CD4-positive, alpha-beta T cell (primary cell): ENCODE measurements at regions of chr18 and their contacts with region 1.

Region 1: DNA sequence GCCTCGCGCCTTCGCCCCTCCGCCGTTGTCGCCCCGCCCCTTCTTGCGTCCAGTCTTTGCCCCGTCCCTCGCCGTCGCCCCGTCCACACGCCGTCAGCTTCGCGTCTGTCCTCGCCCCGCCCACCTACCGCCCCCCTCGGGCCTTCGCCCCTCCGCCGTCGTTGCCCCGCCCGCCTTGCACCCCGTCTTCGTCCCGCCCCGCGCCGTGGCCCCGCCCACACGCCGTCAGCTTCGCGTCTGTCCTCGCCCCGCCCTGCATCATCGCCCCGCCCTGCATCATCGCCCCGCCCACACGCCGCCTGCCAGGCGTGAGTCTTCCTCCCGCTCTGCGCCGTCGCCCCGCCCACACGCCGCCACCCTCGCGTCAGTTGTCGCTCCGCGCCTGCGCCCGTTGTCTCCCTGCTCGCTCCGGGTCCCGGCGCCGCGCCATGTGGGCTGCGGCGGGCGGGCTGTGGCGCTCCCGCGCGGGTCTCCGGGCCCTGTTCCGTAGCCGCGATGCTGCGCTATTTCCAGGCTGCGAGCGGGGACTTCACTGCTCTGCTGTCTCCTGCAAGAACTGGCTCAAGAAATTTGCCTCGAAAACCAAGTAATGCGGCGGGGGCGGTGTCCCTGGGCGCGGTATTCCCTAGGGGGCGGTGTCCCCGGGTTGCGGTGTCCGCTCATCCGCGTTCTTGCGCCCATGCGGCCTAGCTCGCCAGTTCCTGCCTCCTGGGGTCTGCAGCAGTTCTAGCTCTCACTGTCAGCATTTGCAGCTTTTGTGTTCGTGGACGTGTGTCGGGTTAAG is at the start of gene RBFA:
- DNase-seq: peak; percentile 99 to 100 (median 100)
- ATAC-seq: peak; percentile 77
- H3K4me3 ChIP-seq: peak within 1 kb of the TSS; percentile 92
- H3K4me3 Mint-ChIP-seq: peak within 1 kb of the TSS; percentile 81
- H3K27ac ChIP-seq: peak within 1 kb of the TSS; percentile 83 to 96
- H3K27ac Mint-ChIP-seq: peak within 1 kb of the TSS; percentile 91
- H3K4me1 ChIP-seq: peaks cover 23% of the 10 kb centered on the region
- H3K4me1 Mint-ChIP-seq: peaks cover 41% of the 10 kb centered on the region
- H3K27me3 ChIP-seq: no peaks in the 10 kb centered on the region
- H3K27me3 Mint-ChIP-seq: no peaks in the 10 kb centered on the region
- CTCF ChIP-seq: peak; percentile 53
- total RNA-seq, gene RBFA: 11.2 to 12.3 TPM

Region 2: GRCh38 chr18:79378542-79379250 is 655.6 kb before region 1 on chr18:
- CTCF ChIA-PET with region 1: no interaction called
- POLR2A ChIA-PET with region 1: no interaction called
- intact Hi-C with region 1: loop called in 1 of 2 experiments (anchors 10 kb)
- DNase-seq: peak; percentile 71 to 92 (median 80)
- ATAC-seq: peak; percentile 96
- H3K4me3 ChIP-seq: no peak overlapping the region
- H3K4me3 Mint-ChIP-seq: no peak overlapping the region
- H3K27ac ChIP-seq: no peak overlapping the region
- H3K27ac Mint-ChIP-seq: no peak overlapping the region
- H3K4me1 ChIP-seq: peaks cover 12% of the 10 kb centered on the region
- H3K4me1 Mint-ChIP-seq: peaks cover 10% of the 10 kb centered on the region
- H3K27me3 ChIP-seq: no peaks in the 10 kb centered on the region
- H3K27me3 Mint-ChIP-seq: no peaks in the 10 kb centered on the region
- CTCF ChIP-seq: peak; percentile 97

Region 3: GRCh38 chr18:79679111-79679872 is 355.0 kb before region 1 on chr18 and contains the start of gene CTDP1:
- CTCF ChIA-PET with region 1: no interaction called
- POLR2A ChIA-PET with region 1: interaction called, 17 read pairs
- intact Hi-C with region 1: loop called (anchors 2 to 5 kb)
- DNase-seq: peak; percentile 95 to 100 (median 98)
- ATAC-seq: peak; percentile 86
- H3K4me3 ChIP-seq: peak within 1 kb of the TSS; percentile 96
- H3K4me3 Mint-ChIP-seq: peak within 1 kb of the TSS; percentile 100
- H3K27ac ChIP-seq: peak within 1 kb of the TSS; percentile 99 to 100
- H3K27ac Mint-ChIP-seq: peak within 1 kb of the TSS; percentile 100
- H3K4me1 ChIP-seq: peaks cover 60% of the 10 kb centered on the region
- H3K4me1 Mint-ChIP-seq: peaks cover 74% of the 10 kb centered on the region
- H3K27me3 ChIP-seq: no peaks in the 10 kb centered on the region
- H3K27me3 Mint-ChIP-seq: no peaks in the 10 kb centered on the region
- CTCF ChIP-seq: no peak
- total RNA-seq, gene CTDP1: 69.0 to 79.6 TPM

Region 4: DNA sequence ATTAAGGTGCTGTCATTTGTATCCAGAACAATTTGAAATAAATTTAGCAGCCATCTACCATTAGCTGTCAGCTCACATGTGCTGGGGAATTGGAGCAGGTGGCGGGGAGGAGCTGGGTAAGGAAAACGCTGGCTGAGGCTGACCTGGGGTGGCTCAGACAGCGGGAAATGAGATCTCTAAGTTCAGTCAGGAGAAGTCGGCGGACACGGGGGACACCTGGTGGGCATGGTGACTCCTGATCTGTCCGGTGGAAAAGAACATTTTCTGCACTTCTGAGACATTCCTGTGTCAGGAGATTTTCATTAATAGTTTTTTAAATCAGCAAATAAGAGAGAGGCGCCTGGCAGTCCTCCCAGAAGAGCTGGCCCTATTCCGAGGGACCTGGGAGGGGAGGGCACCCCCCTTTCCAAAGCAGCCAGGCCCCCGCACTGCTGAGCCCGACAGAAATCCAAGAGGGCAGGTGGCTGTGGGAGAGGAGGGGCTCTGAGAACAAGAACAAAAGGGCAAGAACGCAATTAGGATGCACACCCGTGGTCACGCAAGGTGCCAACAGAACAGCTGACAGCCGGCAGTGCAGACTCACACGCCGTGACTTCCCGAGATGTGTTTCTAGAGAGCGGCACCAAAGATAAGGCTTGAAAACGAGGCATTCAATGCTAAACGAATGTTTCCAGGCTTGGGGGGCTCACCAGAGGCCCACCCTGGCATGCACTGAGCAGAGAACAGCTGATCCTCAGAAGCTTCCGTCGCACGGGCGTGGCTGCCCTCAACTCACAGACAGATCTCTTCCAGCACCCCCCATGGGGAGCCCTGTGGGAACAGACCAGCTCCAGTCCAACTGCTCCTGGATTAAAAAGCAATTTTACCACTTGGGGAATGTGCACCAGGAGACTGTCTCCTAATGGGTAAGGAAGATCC is 109.2 kb before region 1 on chr18:
- CTCF ChIA-PET with region 1: no interaction called
- POLR2A ChIA-PET with region 1: no interaction called
- intact Hi-C with region 1: no loop called
- DNase-seq: peak in 2 of 14 experiments; percentile 6 to 23
- ATAC-seq: no peak
- H3K4me3 ChIP-seq: no peak overlapping the region
- H3K4me3 Mint-ChIP-seq: no peak overlapping the region
- H3K27ac ChIP-seq: no peak overlapping the region
- H3K27ac Mint-ChIP-seq: no peak overlapping the region
- H3K4me1 ChIP-seq: peaks cover 3% of the 10 kb centered on the region
- H3K4me1 Mint-ChIP-seq: peaks cover 3% of the 10 kb centered on the region
- H3K27me3 ChIP-seq: no peaks in the 10 kb centered on the region
- H3K27me3 Mint-ChIP-seq: no peaks in the 10 kb centered on the region
- CTCF ChIP-seq: no peak

Region 5: DNA sequence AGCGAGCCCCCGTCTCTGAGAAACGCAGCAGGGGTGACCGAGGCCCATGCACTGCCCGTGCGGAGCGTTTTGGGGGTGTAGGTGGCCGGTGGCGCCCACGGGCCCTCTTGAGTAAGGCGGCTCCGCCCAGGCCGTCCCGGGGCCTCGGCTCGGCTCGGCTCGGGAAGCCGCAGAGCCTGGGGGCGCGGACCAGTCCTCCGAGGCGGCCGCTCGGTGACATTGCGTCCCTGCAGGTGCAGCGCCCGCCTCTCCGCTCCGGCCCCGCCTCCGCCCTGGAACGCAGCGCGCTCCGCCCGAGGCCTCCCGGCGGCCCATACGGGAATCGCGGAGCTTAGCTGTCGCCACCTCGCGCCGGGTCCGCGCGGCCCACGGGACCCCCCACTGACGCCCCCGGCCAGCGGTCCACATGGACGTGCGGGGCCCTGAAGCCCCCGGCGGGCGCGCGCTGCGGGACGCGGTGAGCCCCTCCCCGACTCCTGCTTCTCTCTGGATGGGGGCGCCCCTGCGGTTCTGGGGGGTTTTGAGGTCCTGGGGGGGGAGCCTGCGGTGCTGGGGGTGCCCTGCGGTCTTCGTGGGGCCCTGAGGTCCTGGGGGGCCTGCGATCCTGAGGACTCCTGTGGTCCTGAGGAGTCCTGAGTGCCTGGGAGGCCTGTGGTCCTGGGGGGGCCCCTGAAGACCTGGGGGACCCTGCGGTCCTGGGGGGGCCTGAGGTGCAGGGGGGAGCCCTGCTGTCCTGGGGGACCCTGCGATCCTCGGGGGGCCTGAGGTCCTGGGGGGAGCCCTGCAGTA is 69.7 kb before region 1 on chr18 and contains the start of gene HSBP1L1:
- CTCF ChIA-PET with region 1: interaction called, 5 read pairs
- POLR2A ChIA-PET with region 1: interaction called, 11 read pairs
- intact Hi-C with region 1: no loop called
- DNase-seq: peak; percentile 36 to 85 (median 64)
- ATAC-seq: peak; percentile 83
- H3K4me3 ChIP-seq: peak within 1 kb of the TSS; percentile 67
- H3K4me3 Mint-ChIP-seq: peak within 1 kb of the TSS; percentile 97
- H3K27ac ChIP-seq: peak within 1 kb of the TSS; percentile 38 to 72
- H3K27ac Mint-ChIP-seq: peak within 1 kb of the TSS; percentile 97
- H3K4me1 ChIP-seq: peaks cover 51% of the 10 kb centered on the region
- H3K4me1 Mint-ChIP-seq: peaks cover 42% of the 10 kb centered on the region
- H3K27me3 ChIP-seq: no peaks in the 10 kb centered on the region
- H3K27me3 Mint-ChIP-seq: peaks cover 4% of the 10 kb centered on the region
- CTCF ChIP-seq: peak; percentile 28
- total RNA-seq, gene HSBP1L1: 42.6 to 42.7 TPM

Region 6: GRCh38 chr18:80108728-80109675 is 74.7 kb after region 1 on chr18 and contains the start of gene ADNP2:
- CTCF ChIA-PET with region 1: interaction called, 3 read pairs
- POLR2A ChIA-PET with region 1: interaction called, 21 read pairs
- intact Hi-C with region 1: loop called (anchors 1 to 2 kb)
- DNase-seq: peak; percentile 48 to 96 (median 76)
- ATAC-seq: peak; percentile 81
- H3K4me3 ChIP-seq: peak within 1 kb of the TSS; percentile 75
- H3K4me3 Mint-ChIP-seq: peak within 1 kb of the TSS; percentile 92
- H3K27ac ChIP-seq: peak within 1 kb of the TSS; percentile 86 to 96
- H3K27ac Mint-ChIP-seq: peak within 1 kb of the TSS; percentile 98
- H3K4me1 ChIP-seq: peaks cover 16% of the 10 kb centered on the region
- H3K4me1 Mint-ChIP-seq: peaks cover 51% of the 10 kb centered on the region
- H3K27me3 ChIP-seq: no peaks in the 10 kb centered on the region
- H3K27me3 Mint-ChIP-seq: no peaks in the 10 kb centered on the region
- CTCF ChIP-seq: no peak
- total RNA-seq, gene ADNP2: 61.0 to 61.5 TPM